ENCODE measurements at regions of chr15 and their contacts with region 1.

Region 1: DNA sequence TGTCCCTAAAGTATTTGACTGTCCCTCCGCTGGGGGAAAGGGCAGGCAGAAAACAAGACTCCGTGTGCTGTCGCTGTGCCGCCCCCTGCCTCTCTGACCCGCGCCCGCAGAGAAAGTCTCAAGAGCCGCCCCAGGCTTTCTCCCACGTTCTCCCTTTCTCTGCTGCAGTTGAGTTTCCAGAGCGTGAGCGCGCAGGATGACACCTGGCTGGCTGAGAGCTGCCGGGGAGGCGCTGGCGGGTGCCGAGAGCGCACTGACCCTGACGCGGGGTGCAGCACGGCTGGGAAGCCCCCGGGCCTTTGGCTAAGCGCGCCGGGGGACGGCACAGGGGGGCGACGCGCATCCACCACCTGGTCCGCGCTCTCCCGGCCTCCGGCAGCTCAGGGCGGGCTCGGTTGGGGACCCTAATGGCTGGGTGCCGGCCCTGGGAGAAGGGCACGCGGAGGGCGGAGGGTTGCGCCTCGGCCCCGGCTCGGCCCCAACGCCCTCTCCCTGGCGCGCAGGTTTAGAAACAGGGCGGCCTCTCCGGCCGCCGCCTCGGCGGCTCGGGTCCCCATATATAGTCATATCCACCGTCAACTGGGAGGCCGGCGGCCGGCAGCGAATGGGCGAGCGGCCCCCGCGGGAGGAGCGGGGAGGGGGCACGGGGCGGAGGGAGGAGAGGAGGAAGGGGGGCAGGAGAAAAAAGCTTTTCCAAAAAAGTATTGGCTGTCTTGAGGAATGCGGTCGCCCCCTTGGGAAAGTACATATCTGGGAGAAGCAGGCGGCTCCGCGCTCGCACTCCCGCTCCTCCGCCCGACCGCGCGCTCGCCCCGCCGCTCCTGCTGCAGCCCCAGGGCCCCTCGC is at the start of gene TPM1:
- DNase-seq: peak; percentile 87
- H3K4me3 ChIP-seq: peak within 1 kb of the TSS; percentile 91
- CTCF ChIP-seq: peak; percentile 2

Region 2: GRCh38 chr15:62782039-62782791 is 260.0 kb before region 1 on chr15:
- CTCF ChIA-PET with region 1: interaction called, 31 read pairs
- POLR2A ChIA-PET with region 1: interaction called, 25 read pairs
- DNase-seq: peak; percentile 70
- H3K4me3 ChIP-seq: no peak overlapping the region
- CTCF ChIP-seq: peak; percentile 76

Region 3: GRCh38 chr15:62847900-62848489 is 194.2 kb before region 1 on chr15:
- CTCF ChIA-PET with region 1: interaction called, 57 read pairs
- POLR2A ChIA-PET with region 1: interaction called, 35 read pairs
- DNase-seq: no peak
- H3K4me3 ChIP-seq: no peak overlapping the region
- CTCF ChIP-seq: peak; percentile 45

Region 4: DNA sequence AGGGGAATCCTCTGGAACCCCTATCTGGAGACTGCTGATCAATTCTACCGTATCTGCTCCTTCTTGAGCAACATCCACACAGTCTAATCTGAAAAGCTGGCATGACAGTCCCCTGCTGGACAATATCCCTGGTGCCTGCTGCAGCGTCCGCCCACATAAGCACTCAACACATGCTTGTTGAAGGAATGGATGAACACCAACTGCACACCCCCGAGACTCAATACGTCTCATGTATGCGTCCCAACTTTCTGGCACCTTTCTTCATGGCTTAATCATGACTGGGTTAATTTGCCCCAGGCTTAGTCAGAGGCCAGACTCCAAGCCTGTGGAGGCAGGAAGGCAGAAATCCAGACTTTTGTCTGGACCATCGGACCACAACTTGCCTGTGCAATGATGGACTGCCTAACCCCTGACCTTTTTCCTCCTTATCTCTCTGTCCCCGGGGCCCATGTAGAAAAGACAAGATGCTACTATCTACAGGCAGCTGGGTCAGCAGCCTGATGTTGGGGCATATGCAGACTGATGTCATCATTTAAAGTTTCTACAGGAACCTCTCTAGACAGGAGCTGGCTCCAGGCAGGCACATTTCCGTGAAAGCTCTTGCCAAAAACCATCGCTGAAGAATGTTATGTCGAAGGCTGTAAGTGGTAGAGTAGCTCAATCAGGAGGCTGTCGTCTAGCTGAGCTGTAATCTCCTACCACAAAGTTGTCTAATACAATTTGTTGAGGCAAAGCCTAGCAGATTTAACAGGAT is 113.8 kb before region 1 on chr15:
- CTCF ChIA-PET with region 1: interaction called, 10 read pairs
- POLR2A ChIA-PET with region 1: interaction called, 99 read pairs
- DNase-seq: peak; percentile 89
- H3K4me3 ChIP-seq: no peak overlapping the region; the same call in 1 of the 2 replicates
- CTCF ChIP-seq: peak; percentile 44

Region 5: GRCh38 chr15:62985768-62986167 is 56.4 kb before region 1 on chr15:
- CTCF ChIA-PET with region 1: no interaction called
- POLR2A ChIA-PET with region 1: no interaction called
- DNase-seq: peak; percentile 57
- H3K4me3 ChIP-seq: no peak overlapping the region
- CTCF ChIP-seq: no peak

Region 6: GRCh38 chr15:63019539-63020109 is 22.6 kb before region 1 on chr15:
- CTCF ChIA-PET with region 1: interaction called, 7 read pairs
- POLR2A ChIA-PET with region 1: interaction called, 22 read pairs
- DNase-seq: peak; percentile 26
- H3K4me3 ChIP-seq: no peak overlapping the region
- CTCF ChIP-seq: no peak

Region 7: DNA sequence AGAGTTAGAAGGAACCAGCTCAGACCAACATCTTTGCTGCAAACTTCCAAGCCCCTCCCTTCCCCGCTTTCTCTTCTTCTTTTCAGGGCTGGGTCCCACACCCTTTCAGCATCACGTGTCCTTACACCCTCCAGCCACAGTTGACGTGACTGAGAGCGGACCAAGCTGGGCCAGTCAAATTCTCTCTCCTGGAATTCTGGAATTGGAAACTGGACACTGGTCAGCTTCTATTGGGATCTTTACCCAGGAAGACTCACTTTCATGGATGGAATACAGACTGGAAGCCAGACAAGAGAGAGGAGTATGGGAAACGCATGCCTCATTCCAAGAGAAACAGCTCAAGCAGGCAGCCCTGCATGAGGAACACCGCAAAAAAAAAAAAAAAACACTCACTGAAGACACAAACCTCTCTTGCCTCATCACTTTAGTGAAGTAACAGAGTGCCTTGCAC is 12.1 kb before region 1 on chr15:
- CTCF ChIA-PET with region 1: interaction called, 5 read pairs
- POLR2A ChIA-PET with region 1: interaction called, 17 read pairs
- DNase-seq: no peak
- H3K4me3 ChIP-seq: no peak overlapping the region
- CTCF ChIP-seq: no peak

Region 8: DNA sequence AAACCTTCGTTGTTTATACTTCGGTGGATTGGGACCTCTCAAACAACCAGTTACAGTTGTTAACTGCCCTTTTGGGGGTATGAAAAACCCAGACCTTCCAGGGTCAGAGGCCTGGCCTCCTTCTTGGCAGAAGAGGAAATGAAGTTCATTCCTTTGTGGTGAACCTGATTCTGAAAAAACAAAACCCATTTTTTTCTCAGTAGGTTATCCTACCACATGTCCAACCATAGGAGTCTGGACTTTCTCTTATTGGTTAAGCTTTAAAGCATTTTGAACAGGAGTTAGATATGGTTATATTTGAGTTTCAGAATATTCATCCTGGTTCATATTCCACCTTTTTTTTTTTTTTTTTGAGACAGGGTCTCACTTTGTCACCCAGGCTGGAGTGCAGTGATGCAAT is 72.3 kb after region 1 on chr15:
- CTCF ChIA-PET with region 1: no interaction called
- POLR2A ChIA-PET with region 1: no interaction called
- DNase-seq: no peak
- H3K4me3 ChIP-seq: no peak overlapping the region
- CTCF ChIP-seq: no peak